Activated T-helper 1 cell treated with anti-CD3 and anti-CD28 coated beads, Interleukin-12 subunit alpha, Interleukin-12 subunit beta, Interleukin-2, Interleukin-4 antibody, amounts not matched to agents 30 ng/mL and 10 ng/mL and 1 ng/mL, durations not matched to agents 14 hours and 24 hours and 36 hours (primary cell): ENCODE measurements at regions of chr2 and their contacts with region 1.

Region 1: GRCh38 chr2:12416600-12416999 is 300.1 kb upstream of the TRIB2 start:
- DNase-seq: peak; percentile 41
- H3K4me3 Mint-ChIP-seq: no peak overlapping the region
- H3K27ac Mint-ChIP-seq: no peak overlapping the region
- H3K4me1 Mint-ChIP-seq: peaks cover 65% of the 10 kb centered on the region
- H3K27me3 Mint-ChIP-seq: peaks cover 2% of the 10 kb centered on the region

Region 2: DNA sequence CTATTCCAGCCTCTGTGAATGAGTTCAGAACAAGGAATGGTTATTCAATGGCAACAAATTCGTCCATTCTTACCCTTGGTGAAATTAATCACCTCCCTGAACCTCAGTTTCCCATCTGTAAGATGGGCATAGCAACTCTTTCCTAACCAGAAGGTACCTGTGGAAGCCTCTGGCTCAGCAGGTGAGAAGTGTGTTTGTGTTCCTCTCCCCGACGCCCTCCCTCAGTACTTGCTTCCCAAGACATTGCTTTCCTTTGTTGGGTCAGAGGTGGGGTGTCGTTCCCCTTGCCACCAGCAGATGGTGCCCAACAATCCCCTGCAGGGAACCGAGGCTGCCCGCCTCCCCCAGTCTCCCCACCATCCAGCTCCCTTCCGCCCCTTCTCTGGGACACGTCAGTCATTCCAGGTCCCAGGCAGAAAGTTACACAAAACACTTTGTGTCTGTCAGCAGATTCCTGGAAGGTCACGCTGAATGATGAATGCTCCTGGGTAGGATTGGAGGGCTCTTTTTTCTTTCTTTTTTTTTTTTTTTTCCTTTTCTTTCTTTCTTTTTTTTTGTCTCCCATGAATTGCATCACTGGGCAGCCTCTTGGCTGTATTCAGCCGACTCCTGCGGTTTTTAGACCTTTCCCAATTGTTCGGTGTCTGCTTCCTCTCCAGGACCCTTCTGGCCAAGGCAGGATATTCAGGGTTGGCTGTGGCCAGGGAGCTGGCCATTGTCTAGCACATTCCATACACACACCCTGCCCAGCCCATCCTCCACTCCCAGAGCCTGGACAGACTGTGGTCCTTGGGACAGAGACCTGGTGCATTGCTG is 552.9 kb before region 1 on chr2:
- intact Hi-C with region 1: loop called (anchors 10 kb)
- DNase-seq: peak; percentile 22
- H3K4me3 Mint-ChIP-seq: no peak overlapping the region
- H3K27ac Mint-ChIP-seq: no peak overlapping the region
- H3K4me1 Mint-ChIP-seq: peaks cover 9% of the 10 kb centered on the region
- H3K27me3 Mint-ChIP-seq: peaks cover 19% of the 10 kb centered on the region

Region 3: GRCh38 chr2:12180031-12180430 is 236.6 kb before region 1 on chr2:
- intact Hi-C with region 1: no loop called
- DNase-seq: no peak
- H3K4me3 Mint-ChIP-seq: no peak overlapping the region
- H3K27ac Mint-ChIP-seq: no peak overlapping the region
- H3K4me1 Mint-ChIP-seq: peaks cover 38% of the 10 kb centered on the region
- H3K27me3 Mint-ChIP-seq: peaks cover 7% of the 10 kb centered on the region

Region 4: GRCh38 chr2:12555012-12555645 is 138.5 kb after region 1 on chr2:
- intact Hi-C with region 1: loop called (anchors 5 kb)
- DNase-seq: no peak
- H3K4me3 Mint-ChIP-seq: peak overlapping the region; percentile 44
- H3K27ac Mint-ChIP-seq: peak overlapping the region; percentile 88
- H3K4me1 Mint-ChIP-seq: peaks cover 41% of the 10 kb centered on the region
- H3K27me3 Mint-ChIP-seq: no peaks in the 10 kb centered on the region

Region 5: DNA sequence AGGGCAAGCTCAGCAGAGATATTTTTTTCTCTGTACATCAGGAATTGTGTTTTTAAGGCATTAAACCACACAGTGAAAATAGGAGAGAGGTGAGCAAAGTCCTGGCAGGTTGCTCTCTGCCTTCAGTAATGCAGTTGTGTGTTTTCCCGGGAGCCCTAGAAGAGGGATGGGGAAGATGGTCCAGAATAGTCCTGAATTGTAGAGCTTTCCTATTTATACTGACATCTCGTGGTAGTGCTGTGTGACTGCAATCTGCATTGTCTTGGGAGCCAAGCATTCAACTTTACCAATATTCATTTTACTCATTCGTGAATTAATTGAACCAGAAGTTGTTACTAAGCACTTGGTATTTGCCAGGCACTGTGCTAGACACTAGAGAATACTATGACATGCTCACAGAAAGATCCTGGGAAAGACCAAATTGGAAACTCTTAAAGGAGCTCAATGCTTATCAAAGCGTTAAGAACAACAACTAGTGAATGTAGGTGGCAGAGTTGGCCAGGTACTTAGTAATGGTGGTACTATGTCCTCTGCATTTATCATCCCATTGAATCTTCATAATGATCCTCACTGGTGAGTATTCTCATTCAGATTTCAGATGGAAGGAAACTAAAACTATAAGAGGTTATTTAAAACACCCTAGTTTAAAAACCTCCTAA is 514.7 kb after region 1 on chr2:
- intact Hi-C with region 1: loop called (anchors 2 kb)
- DNase-seq: no peak
- H3K4me3 Mint-ChIP-seq: no peak overlapping the region
- H3K27ac Mint-ChIP-seq: no peak overlapping the region
- H3K4me1 Mint-ChIP-seq: peaks cover 10% of the 10 kb centered on the region
- H3K27me3 Mint-ChIP-seq: peaks cover 41% of the 10 kb centered on the region